Aorta (tissue), 5 donors: ENCODE measurements at regions of chr16 and their contacts with region 1.

Region 1: GRCh38 chr16:11546608-11547061 is 40.1 kb downstream of the LITAF start:
- DNase-seq: no peak
- ATAC-seq: no peak
- H3K4me3 ChIP-seq: no peak overlapping the region
- H3K27ac ChIP-seq: peak overlapping the region in 1 of 2 donors; percentile 49
- H3K4me1 ChIP-seq: no peaks in the 10 kb centered on the region
- H3K27me3 ChIP-seq: no peaks in the 10 kb centered on the region

Region 2: DNA sequence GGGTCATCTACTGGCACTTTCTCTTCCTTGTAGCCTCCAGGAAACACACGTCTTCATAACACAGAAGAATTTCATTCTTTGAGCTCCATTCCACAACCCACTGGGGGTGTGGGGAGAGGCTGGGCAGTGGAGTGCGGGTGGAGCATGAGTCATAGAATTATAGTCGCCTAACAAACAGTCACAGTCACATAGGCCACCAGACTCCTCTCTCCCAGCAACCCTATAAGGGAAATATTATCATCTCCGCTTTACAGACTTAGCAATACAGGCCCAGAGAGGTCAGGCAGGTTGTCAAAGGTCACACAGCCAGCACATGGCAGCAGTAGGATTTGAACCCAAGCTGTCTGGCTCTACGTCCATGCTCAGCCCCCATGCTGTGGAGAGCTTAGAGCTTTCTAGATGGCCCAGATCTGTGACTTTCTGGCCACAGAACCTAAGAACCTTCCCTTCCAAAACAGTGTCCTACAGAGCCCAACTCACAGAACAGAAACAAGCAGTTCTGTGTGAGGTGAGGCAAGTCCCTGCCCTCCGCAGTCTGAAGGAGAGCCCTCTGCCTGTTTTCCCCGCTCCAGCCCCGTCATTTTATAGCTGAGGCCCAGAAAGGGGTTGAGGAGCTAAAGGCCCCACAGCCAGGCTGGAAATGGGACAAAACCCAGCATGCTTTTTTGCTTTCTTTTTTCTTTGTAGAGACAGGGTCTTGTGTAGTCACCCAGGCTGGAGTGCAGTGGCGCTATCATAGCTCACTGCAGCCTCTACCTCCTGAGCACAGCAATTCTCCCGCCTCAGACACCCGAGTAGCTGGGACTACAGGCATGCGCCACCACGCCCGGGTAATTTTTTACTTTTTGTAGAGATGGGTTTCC is 50.8 kb after region 1 on chr16:
- intact Hi-C with region 1: loop called in 1 of 2 experiments (anchors 5 kb)
- DNase-seq: peak; percentile 49 to 70
- ATAC-seq: peak; percentile 54
- H3K4me3 ChIP-seq: no peak overlapping the region
- H3K27ac ChIP-seq: peak overlapping the region in 1 of 2 donors; percentile 61
- H3K4me1 ChIP-seq: no peaks in the 10 kb centered on the region
- H3K27me3 ChIP-seq: no peaks in the 10 kb centered on the region